GM12878 (cell line): ENCODE measurements at regions of chr11 and their contacts with region 1.

Region 1: DNA sequence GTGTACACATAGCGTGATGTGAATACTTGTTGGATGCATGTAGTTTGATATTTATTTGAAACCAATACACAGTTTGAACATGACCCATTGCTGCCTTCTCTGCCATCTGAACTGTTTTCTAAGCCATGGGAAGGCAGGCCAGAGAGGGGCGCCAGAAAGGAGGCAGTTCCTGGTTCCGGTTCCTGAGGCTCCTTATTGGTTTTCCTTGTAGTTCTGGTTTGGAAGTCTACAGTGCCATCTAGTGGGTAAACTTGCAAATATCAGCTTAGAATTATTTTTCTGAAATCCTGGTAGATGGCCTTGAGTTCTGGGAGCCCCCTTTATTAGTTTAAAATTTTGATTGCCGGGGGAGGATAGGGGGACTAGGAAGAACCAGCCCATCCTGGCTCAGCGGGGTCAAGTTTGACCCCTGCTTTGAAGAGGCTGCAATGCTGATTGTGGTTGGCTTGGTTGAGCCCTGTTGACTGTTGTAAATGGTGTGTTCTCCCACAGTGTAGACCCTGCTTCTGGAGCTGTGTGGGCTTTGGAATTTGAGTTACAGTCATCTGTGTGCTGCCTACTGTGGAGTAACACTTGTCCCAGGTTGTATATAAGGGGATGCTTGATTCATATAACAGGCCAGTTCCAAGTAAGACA is 48.4 kb downstream of the GRAMD1B start:
- DNase-seq: peak; percentile 60
- ATAC-seq: peak; percentile 33
- H3K4me3 ChIP-seq: peak overlapping the region; percentile 54
- H3K27ac ChIP-seq: peak overlapping the region; percentile 36; the same call in 1 of the 2 replicates
- H3K4me1 ChIP-seq: peaks cover 53% of the 10 kb centered on the region
- H3K27me3 ChIP-seq: no peaks in the 10 kb centered on the region
- CTCF ChIP-seq: peak; percentile 61 to 77 (median 68)
- EP300 ChIP-seq: no peak
- POLR2A ChIP-seq: no peak
- RAD21 ChIP-seq: peak; percentile 92

Region 2: GRCh38 chr11:123152956-123153355 is 325.5 kb before region 1 on chr11:
- CTCF ChIA-PET with region 1: no interaction called
- POLR2A ChIA-PET with region 1: no interaction called
- RAD21 ChIA-PET with region 1: no interaction called
- SMC1A ChIA-PET with region 1: no interaction called
- in situ Hi-C with region 1: no loop called
- intact Hi-C with region 1: no loop called
- DNase-seq: no peak
- ATAC-seq: no peak
- H3K4me3 ChIP-seq: no peak overlapping the region
- H3K27ac ChIP-seq: no peak overlapping the region
- H3K4me1 ChIP-seq: no peaks in the 10 kb centered on the region
- H3K27me3 ChIP-seq: no peaks in the 10 kb centered on the region; a peak in 2 of 4 replicates
- CTCF ChIP-seq: no peak
- EP300 ChIP-seq: no peak
- POLR2A ChIP-seq: no peak
- RAD21 ChIP-seq: no peak

Region 3: DNA sequence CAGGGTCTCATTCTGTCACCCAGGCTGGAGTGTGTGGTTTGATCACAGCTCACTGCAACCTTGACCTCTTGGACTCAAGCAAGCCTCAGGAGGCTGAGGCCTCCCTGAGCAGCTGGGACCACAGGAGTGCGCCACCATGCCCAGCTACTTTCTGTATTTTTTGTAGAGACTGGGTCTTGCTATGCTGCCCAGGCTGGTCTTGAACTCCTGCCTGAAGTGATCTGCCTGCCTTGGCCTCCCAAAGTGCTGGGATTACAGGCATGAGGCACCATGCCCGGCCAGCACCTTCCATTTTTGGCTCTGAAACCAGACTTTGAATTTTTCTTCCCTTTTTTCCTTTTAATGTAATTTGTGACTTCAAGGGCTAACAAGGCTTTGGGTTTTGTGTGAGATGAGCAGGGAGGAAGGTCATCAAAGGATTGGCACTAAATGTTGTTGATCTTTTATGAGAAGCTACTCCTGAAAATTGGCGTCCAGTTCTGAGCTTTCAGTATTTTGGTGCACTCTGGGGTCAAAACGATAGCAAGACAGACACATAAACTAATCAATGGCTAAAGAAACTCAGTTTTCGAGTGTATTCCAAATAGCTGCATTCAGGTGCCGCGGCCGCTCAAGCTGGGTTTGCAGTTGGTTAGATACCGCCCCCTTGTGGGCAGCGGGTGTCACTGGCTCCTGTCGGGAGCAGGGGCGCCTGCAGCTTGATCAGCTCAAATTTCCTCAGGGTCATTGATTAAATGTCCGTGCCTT is 231.5 kb before region 1 on chr11:
- CTCF ChIA-PET with region 1: interaction called, 29 read pairs
- POLR2A ChIA-PET with region 1: no interaction called
- RAD21 ChIA-PET with region 1: interaction called, 19 read pairs
- SMC1A ChIA-PET with region 1: interaction called, 33 read pairs
- in situ Hi-C with region 1: no loop called
- intact Hi-C with region 1: loop called (anchors 2 kb)
- DNase-seq: no peak
- ATAC-seq: peak; percentile 96
- H3K4me3 ChIP-seq: no peak overlapping the region
- H3K27ac ChIP-seq: no peak overlapping the region
- H3K4me1 ChIP-seq: no peaks in the 10 kb centered on the region; the same call in 1 of the 2 replicates
- H3K27me3 ChIP-seq: peaks cover 0 to 2% of the 10 kb centered on the region in 2 experiments; a peak in 1 of 4 replicates
- CTCF ChIP-seq: peak; percentile 96 to 98 (median 98)
- EP300 ChIP-seq: no peak
- POLR2A ChIP-seq: no peak
- RAD21 ChIP-seq: peak; percentile 93

Region 4: DNA sequence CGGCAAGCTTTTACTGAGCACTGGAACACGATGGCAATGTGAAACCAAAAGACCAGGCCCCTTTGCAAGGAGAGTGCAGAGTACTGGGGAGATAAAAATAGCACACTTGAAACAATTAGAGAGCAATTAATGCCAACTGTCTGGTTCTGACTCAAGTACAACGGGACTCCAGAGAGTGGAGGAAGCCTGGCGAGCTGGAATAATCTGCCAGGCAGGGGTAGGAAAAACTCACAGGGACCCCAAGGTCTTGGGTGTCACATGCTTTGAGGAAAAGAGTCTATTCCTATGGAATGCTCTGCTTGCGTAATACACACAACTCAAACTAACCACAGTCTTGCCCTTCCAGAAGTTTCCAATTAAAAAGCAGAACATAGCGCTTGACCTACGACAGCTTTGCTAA is 170.4 kb before region 1 on chr11:
- CTCF ChIA-PET with region 1: interaction called, 146 read pairs
- POLR2A ChIA-PET with region 1: interaction called, 7 read pairs
- RAD21 ChIA-PET with region 1: interaction called, 62 read pairs
- SMC1A ChIA-PET with region 1: interaction called, 61 read pairs
- in situ Hi-C with region 1: loop called (anchors 5 kb)
- intact Hi-C with region 1: no loop called
- DNase-seq: peak; percentile 19
- ATAC-seq: peak; percentile 33
- H3K4me3 ChIP-seq: no peak overlapping the region
- H3K27ac ChIP-seq: no peak overlapping the region
- H3K4me1 ChIP-seq: peaks cover 12% of the 10 kb centered on the region
- H3K27me3 ChIP-seq: no peaks in the 10 kb centered on the region; a peak in 1 of 4 replicates
- CTCF ChIP-seq: no peak
- EP300 ChIP-seq: no peak
- POLR2A ChIP-seq: no peak
- RAD21 ChIP-seq: no peak

Region 5: GRCh38 chr11:123344790-123345357 is 133.6 kb before region 1 on chr11:
- CTCF ChIA-PET with region 1: no interaction called
- POLR2A ChIA-PET with region 1: no interaction called
- RAD21 ChIA-PET with region 1: no interaction called
- SMC1A ChIA-PET with region 1: no interaction called
- in situ Hi-C with region 1: no loop called
- intact Hi-C with region 1: no loop called
- DNase-seq: no peak
- ATAC-seq: no peak
- H3K4me3 ChIP-seq: no peak overlapping the region
- H3K27ac ChIP-seq: no peak overlapping the region
- H3K4me1 ChIP-seq: no peaks in the 10 kb centered on the region
- H3K27me3 ChIP-seq: no peaks in the 10 kb centered on the region
- CTCF ChIP-seq: no peak
- EP300 ChIP-seq: no peak
- POLR2A ChIP-seq: no peak
- RAD21 ChIP-seq: no peak

Region 6: DNA sequence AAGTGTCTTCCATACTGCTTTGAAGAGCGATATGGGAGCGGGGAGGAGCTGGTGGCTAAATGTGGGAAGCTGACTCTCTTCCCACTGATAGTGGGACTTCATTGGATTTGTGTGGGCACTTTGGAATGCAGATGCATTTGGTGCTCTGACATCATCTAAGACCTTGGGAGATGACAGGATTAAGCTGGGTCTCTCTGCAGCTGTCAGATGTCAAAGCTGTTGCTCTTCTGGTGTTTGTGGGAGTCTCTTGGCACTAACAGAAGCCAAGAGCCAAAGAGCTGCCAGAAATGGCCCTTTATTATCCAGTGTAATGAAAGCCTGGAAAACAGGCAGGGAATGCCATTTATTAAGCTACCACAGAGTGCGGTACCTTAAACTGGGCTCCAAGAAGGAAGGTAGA is 27.8 kb before region 1 on chr11:
- CTCF ChIA-PET with region 1: interaction called, 12 read pairs
- POLR2A ChIA-PET with region 1: no interaction called
- RAD21 ChIA-PET with region 1: interaction called, 3 read pairs
- SMC1A ChIA-PET with region 1: interaction called, 4 read pairs
- in situ Hi-C with region 1: no loop called
- intact Hi-C with region 1: no loop called
- DNase-seq: no peak
- ATAC-seq: no peak
- H3K4me3 ChIP-seq: no peak overlapping the region
- H3K27ac ChIP-seq: no peak overlapping the region
- H3K4me1 ChIP-seq: peaks cover 32% of the 10 kb centered on the region
- H3K27me3 ChIP-seq: no peaks in the 10 kb centered on the region
- CTCF ChIP-seq: no peak
- EP300 ChIP-seq: no peak
- POLR2A ChIP-seq: no peak
- RAD21 ChIP-seq: no peak

Region 7: GRCh38 chr11:123519055-123519796 is 40.8 kb after region 1 on chr11:
- CTCF ChIA-PET with region 1: interaction called, 6 read pairs
- POLR2A ChIA-PET with region 1: interaction called, 3 read pairs
- RAD21 ChIA-PET with region 1: interaction called, 15 read pairs
- SMC1A ChIA-PET with region 1: interaction called, 6 read pairs
- in situ Hi-C with region 1: no loop called
- intact Hi-C with region 1: no loop called
- DNase-seq: no peak
- ATAC-seq: peak; percentile 18
- H3K4me3 ChIP-seq: no peak overlapping the region
- H3K27ac ChIP-seq: no peak overlapping the region
- H3K4me1 ChIP-seq: peaks cover 25% of the 10 kb centered on the region
- H3K27me3 ChIP-seq: no peaks in the 10 kb centered on the region
- CTCF ChIP-seq: no peak
- EP300 ChIP-seq: no peak
- POLR2A ChIP-seq: no peak
- RAD21 ChIP-seq: no peak

Region 8: GRCh38 chr11:123590296-123590912 is 111.9 kb after region 1 on chr11:
- CTCF ChIA-PET with region 1: no interaction called
- POLR2A ChIA-PET with region 1: no interaction called
- RAD21 ChIA-PET with region 1: no interaction called
- SMC1A ChIA-PET with region 1: no interaction called
- in situ Hi-C with region 1: no loop called
- intact Hi-C with region 1: no loop called
- DNase-seq: no peak
- ATAC-seq: no peak; the same call in 2 of the 3 replicates
- H3K4me3 ChIP-seq: no peak overlapping the region
- H3K27ac ChIP-seq: no peak overlapping the region
- H3K4me1 ChIP-seq: no peaks in the 10 kb centered on the region
- H3K27me3 ChIP-seq: no peaks in the 10 kb centered on the region
- CTCF ChIP-seq: no peak
- EP300 ChIP-seq: no peak
- POLR2A ChIP-seq: no peak
- RAD21 ChIP-seq: no peak